HEK293 (cell line): ENCODE measurements at regions of chr11 and their contacts with region 1.

Region 1: DNA sequence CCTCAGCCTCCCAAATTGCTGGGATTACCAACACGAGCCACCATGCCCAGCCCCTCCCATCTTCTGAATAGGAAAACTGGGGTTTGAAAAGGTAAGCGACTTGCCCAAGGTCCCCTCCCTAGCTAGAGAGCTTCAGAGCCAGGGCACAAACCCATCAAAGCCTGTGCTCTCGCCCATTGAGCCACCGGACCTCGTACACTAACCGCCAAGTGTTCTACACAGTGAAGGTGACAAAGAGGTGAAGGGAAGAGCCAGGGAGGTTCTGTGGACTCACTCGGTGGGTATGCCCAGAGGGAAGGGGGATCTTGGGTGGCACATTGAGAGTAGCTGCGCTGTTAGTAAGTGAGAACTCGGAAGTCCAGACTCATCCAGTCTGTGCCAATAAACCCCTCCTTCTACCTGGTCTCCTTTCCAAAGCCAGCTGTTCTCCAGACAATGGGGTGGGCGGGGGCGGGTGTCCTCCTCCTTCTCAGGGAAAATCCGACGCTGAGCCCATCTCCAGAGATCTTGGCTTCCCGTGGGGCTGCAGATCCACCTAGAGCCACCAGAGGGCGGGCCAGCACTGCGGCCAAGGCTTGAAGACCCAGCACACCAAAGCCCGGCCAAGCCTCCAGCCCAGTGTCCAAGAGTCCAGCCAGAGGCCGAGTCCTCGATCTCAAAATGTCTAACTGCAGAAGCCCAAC is 3.2 kb upstream of the RTN4RL2 start:
- H3K4me3 ChIP-seq: no peak overlapping the region
- H3K27ac ChIP-seq: no peak overlapping the region
- H3K4me1 ChIP-seq: no peaks in the 10 kb centered on the region
- CTCF ChIP-seq: peak; percentile 52

Region 2: GRCh38 chr11:57205041-57205671 is 251.9 kb before region 1 on chr11:
- CTCF ChIA-PET with region 1: no interaction called
- POLR2A ChIA-PET with region 1: no interaction called
- H3K4me3 ChIP-seq: no peak overlapping the region
- H3K27ac ChIP-seq: no peak overlapping the region
- H3K4me1 ChIP-seq: no peaks in the 10 kb centered on the region
- CTCF ChIP-seq: no peak

Region 3: DNA sequence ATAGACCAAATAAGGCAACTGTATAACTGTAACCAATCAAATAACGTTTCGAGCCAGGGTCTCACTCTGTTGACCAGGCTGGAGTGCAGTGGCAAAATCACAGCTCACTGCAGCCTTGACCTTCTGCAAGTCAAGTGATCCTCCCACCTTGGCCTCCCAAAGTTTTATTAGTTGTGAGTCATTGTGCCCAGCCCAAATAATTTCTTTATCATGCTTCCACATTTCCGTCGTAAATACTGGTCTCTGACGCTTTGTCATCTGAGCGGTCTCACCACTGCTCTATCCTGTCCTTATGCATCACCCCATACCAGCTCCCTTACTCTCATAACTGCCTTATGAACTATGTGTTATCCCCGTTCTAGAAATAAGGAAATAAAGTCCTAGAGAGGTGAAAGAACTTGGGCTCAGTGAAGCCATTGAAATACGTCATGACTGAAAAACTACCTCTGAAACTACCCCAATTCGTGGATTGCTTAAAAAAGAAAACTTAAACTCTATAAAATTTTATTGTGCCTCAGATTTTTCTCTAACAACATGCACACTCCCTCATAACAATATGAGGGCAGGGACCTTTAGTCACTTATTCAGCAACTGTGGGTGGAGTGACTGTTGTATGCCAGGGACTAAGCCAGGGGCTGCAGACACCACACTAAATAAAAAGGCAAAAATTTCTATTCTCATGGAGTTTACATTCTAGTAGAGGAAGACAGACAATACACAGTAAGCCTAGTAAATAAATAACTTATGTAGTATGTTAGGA is 12.6 kb before region 1 on chr11:
- CTCF ChIA-PET with region 1: interaction called, 19 read pairs
- POLR2A ChIA-PET with region 1: no interaction called
- H3K4me3 ChIP-seq: no peak overlapping the region
- H3K27ac ChIP-seq: no peak overlapping the region
- H3K4me1 ChIP-seq: no peaks in the 10 kb centered on the region
- CTCF ChIP-seq: no peak

Region 4: DNA sequence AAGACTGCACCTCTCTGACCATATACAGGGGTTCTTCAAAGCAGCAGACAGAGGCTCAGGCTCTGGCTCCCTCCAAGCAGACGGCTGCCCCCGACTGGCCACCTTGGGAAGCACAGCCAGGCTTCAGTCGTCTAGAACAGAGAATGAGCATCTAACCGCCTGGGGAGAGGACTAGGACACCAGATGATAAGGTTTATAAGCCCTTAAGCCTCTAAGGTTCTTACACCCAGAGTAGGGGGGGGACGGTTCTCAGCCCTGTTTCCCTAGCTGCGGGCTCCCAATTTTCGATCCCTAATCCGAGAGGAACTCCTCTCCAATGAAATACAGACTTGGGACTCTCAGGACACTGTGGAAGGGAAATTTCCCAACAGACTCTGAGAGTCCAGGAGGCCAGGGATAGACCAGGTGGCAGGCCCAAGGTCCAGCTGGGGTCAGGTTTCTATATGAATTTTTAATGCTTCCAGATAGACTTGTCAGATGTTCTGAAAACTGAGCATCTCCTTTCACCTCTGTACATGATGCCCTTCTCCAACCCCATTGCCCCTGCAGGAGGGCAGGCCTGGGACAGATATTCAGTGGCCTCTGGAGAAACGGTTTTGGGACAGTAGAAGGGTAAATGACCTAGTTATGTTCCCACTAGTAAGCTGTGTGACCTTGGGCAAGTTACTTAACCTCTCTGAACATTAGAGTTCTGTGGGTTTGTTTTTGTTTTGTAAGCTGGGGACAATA is 23.5 kb after region 1 on chr11:
- CTCF ChIA-PET with region 1: interaction called, 140 read pairs
- POLR2A ChIA-PET with region 1: interaction called, 3 read pairs
- H3K4me3 ChIP-seq: no peak overlapping the region
- H3K27ac ChIP-seq: no peak overlapping the region
- H3K4me1 ChIP-seq: no peaks in the 10 kb centered on the region; the same call in 1 of the 2 replicates
- CTCF ChIP-seq: no peak

Region 5: GRCh38 chr11:57638005-57638781 is 181.1 kb after region 1 on chr11:
- CTCF ChIA-PET with region 1: interaction called, 14 read pairs
- POLR2A ChIA-PET with region 1: interaction called, 3 read pairs
- H3K4me3 ChIP-seq: peak overlapping the region; percentile 70
- H3K27ac ChIP-seq: peak overlapping the region; percentile 62; the same call in 1 of the 2 replicates
- H3K4me1 ChIP-seq: no peaks in the 10 kb centered on the region; the same call in 1 of the 2 replicates
- CTCF ChIP-seq: no peak

Region 6: GRCh38 chr11:57657194-57658022 is 200.3 kb after region 1 on chr11 and contains the start of gene CLP1:
- CTCF ChIA-PET with region 1: no interaction called
- POLR2A ChIA-PET with region 1: no interaction called
- H3K4me3 ChIP-seq: peak within 1 kb of the TSS; percentile 73
- H3K27ac ChIP-seq: 0 out of 2 replicates have a peak within 1 kb of the TSS, but pooled peaks have one; percentile 11
- H3K4me1 ChIP-seq: no peaks in the 10 kb centered on the region
- CTCF ChIP-seq: no peak